ENCODE measurements at regions of chr14 and their contacts with region 1.

Region 1: DNA sequence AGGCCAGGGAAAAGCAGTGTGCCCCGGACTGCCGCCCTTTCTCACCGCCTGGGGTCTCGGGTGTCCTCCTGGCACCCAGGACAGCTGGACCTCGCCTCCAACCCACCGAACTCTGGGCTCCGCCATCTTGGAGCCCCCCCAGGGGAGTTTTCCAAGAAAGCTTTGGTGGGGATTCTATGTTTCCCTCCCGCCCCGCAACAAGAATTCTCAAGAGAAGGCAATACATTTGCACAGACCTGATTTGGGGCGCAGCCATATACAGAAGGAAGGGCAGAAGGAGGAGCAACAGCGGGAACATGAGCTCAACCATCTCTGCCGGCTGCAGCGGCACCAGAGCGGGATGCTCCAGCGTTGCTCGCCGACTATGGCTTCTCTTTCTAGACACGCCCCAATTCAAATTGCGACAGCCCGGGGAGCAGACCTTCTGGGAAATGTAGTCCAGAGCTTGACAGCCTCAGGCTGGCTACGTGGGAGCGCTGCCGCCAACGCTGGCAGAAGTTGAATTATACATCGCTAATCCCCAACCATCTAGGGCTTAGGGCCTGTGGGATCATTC is at the start of gene RDH11:
- DNase-seq: peak; percentile 80
- H3K4me3 Mint-ChIP-seq: peak within 1 kb of the TSS; percentile 95
- H3K27ac Mint-ChIP-seq: peak within 1 kb of the TSS; percentile 98
- H3K4me1 Mint-ChIP-seq: peaks cover 42% of the 10 kb centered on the region
- H3K27me3 Mint-ChIP-seq: no peaks in the 10 kb centered on the region
- total RNA-seq, gene RDH11: 63.2 and 66.1 TPM in 2 replicates

Region 2: DNA sequence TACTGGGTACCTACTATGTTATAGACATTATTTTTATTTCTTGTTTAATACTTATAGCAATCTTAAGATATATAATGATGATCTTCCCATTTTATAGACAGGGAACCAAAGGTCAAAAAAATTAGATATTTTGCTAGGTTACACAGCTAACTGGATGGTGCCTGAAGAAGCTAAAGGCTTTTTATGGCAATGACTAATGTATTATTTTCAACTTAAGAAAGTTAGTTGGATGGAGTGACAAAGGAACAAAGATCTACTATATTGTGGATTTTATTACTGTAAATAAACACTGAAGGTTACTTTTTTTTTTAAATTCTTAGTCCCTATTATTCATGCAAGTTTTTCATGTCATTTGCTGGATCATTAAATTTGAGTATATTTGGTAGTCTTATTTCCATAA is 959.6 kb before region 1 on chr14:
- intact Hi-C with region 1: no loop called
- DNase-seq: no peak
- H3K4me3 Mint-ChIP-seq: no peak overlapping the region
- H3K27ac Mint-ChIP-seq: no peak overlapping the region
- H3K4me1 Mint-ChIP-seq: no peaks in the 10 kb centered on the region
- H3K27me3 Mint-ChIP-seq: no peaks in the 10 kb centered on the region

Region 3: GRCh38 chr14:67335781-67336180 is 359.7 kb before region 1 on chr14:
- intact Hi-C with region 1: no loop called
- DNase-seq: no peak
- H3K4me3 Mint-ChIP-seq: no peak overlapping the region
- H3K27ac Mint-ChIP-seq: no peak overlapping the region
- H3K4me1 Mint-ChIP-seq: no peaks in the 10 kb centered on the region
- H3K27me3 Mint-ChIP-seq: no peaks in the 10 kb centered on the region

Region 4: DNA sequence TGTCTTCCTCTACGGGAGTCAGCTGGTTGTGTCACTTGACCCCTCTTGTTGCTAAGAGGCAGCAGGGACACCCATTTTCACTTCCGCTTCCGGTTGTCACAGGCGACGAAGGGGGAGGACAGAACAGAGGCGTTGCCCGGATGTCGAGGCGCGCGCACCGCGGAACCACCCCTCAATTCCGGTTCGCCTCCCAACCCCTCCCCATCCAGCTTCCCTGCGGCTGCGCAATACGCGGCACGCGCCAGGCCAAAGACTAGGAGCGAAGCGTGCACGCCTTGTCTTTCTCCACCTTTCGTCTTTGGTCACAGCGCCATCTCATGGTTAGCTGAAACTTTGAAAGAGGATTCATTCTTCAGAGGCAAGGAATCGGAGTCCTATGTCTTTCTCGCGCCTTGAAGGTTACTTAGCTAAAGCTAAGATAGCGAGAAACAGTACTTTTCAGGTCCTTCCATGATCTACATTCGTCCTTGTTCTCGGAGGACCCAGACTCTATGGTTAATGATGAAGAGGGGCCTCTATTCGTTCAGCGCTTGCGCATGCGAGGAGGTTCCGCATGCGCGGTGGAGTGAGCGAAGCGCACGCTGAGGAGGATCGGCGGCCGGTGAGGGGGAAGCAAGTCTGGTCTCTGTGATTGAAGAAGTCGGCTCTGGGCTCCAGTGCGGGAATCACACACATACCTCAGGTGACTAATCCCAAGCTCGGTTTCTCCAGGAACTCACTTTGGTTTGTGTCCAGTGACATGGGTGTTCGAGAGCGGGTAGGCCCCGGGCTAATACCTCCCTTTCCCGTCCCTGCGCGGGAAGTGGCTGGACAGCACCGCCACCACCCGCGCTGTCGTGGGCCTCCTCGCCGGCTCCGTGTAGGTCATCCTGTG is 335.5 kb before region 1 on chr14 and contains the starts of genes ATP6V1D and EIF2S1:
- intact Hi-C with region 1: loop called (anchors 1 kb)
- DNase-seq: peak; percentile 100
- H3K4me3 Mint-ChIP-seq: peak within 1 kb of the TSS; percentile 92
- H3K27ac Mint-ChIP-seq: peak within 1 kb of the TSS; percentile 97
- H3K4me1 Mint-ChIP-seq: peaks cover 81% of the 10 kb centered on the region
- H3K27me3 Mint-ChIP-seq: no peaks in the 10 kb centered on the region
- total RNA-seq, gene ATP6V1D: 29.1 and 30.8 TPM in 2 replicates
- total RNA-seq, gene EIF2S1: 234 and 245 TPM in 2 replicates

Region 5: DNA sequence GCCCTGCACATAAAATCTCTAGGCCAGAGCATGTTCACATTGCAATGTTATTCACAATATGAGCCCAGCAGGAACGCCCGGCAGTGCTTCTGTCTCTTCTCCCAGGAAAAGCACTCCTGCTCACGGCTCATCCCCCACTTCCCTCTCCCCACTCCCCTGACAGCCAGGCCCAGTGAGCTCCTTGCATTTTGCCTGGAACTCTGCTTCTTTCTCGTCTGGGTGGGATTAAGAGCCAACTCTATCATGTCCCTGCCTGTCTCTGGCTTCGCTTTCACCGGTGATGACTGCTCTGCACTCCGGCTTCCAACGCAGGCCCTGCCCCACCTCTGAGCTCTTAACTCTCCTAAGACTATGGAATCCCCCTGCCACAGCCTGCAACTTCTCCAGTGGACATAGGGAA is 286.0 kb before region 1 on chr14:
- intact Hi-C with region 1: no loop called
- DNase-seq: no peak
- H3K4me3 Mint-ChIP-seq: no peak overlapping the region
- H3K27ac Mint-ChIP-seq: no peak overlapping the region
- H3K4me1 Mint-ChIP-seq: peaks cover 13% of the 10 kb centered on the region
- H3K27me3 Mint-ChIP-seq: peaks cover 23% of the 10 kb centered on the region

Region 6: GRCh38 chr14:67487937-67488893 is 207.3 kb before region 1 on chr14 and contains the start of gene TMEM229B:
- intact Hi-C with region 1: loop called (anchors 1 kb)
- DNase-seq: peak; percentile 80
- H3K4me3 Mint-ChIP-seq: peak within 1 kb of the TSS; percentile 82
- H3K27ac Mint-ChIP-seq: peak within 1 kb of the TSS; percentile 81
- H3K4me1 Mint-ChIP-seq: peaks cover 44% of the 10 kb centered on the region
- H3K27me3 Mint-ChIP-seq: peaks cover 13% of the 10 kb centered on the region
- total RNA-seq, gene TMEM229B: 1.7 and 1.8 TPM in 2 replicates

Region 7: DNA sequence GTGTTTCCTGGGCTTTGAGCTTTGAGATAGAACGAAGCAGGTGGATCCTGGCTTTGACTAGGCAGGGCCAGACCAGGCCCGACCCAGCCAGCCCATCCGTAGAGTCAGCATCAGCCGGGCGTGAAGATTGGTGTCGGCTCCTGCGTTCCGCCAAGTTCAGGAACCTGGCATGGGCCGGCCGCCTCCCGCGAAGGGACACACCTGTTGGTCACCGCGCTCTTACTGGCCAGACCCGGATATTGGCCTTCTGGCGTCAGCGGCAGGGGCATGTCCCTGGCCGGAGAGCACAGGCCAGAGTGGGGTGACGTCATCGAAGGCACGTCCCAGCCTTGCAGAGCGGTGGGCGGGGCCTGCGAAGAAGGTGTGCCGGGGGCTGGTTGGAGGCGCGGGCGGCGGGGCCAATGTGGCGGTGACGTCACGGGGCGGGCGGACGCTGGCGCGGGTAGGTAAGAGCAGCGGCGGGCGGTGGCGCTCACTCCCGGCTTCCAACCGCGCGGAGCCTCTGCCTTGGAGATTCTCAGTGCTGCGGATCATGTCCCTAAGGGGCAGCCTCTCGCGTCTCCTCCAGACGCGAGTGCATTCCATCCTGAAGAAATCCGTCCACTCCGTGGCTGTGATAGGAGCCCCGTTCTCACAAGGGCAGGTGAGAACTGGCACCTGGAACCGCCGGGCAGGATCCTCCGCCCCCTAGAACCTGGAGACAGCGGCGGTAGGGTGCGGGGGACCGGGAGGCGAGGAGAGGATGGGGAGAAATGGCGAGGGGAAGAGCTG is 75.8 kb before region 1 on chr14 and contains the start of gene ARG2:
- intact Hi-C with region 1: loop called (anchors 1 kb)
- DNase-seq: peak; percentile 94
- H3K4me3 Mint-ChIP-seq: peak within 1 kb of the TSS; percentile 86
- H3K27ac Mint-ChIP-seq: peak within 1 kb of the TSS; percentile 71
- H3K4me1 Mint-ChIP-seq: peaks cover 39% of the 10 kb centered on the region
- H3K27me3 Mint-ChIP-seq: peaks cover 14% of the 10 kb centered on the region
- total RNA-seq, gene ARG2: 5.2 and 7.1 TPM in 2 replicates

Region 8: DNA sequence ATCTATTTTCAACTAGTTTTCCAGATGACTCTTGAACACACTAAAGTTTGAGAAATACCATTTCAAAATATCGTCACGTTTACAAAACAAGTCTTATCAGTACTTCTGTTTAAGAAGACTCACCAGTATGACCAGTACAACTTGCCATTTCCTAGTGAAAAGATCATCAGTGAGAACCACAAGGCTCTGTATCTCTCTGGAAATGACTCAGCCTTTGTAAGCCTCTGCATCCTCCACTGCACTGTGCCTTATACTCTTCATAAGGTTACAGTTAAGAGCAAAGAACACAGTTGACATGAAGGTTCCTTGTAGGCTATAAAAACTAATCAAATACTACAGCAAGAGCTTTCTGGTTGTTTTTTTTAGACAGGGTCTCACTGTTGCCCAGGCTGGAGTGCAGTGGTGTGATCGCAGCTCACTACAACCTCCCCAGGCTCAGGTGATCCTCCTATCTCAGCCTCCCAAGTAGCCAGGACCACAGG is 15.3 kb before region 1 on chr14:
- intact Hi-C with region 1: loop called (anchors 1 kb)
- DNase-seq: peak; percentile 42
- H3K4me3 Mint-ChIP-seq: peak overlapping the region; percentile 7
- H3K27ac Mint-ChIP-seq: peak overlapping the region; percentile 34
- H3K4me1 Mint-ChIP-seq: peaks cover 48% of the 10 kb centered on the region
- H3K27me3 Mint-ChIP-seq: no peaks in the 10 kb centered on the region